Calu3 (cell line): ENCODE measurements at regions of chr13 and their contacts with region 1.

Region 1: GRCh38 chr13:45310341-45311125 is 30.4 kb downstream of the TPT1 start:
- DNase-seq: no peak
- H3K4me3 Mint-ChIP-seq: peak overlapping the region; percentile 68
- H3K27ac Mint-ChIP-seq: no peak overlapping the region
- H3K4me1 Mint-ChIP-seq: peaks cover 10% of the 10 kb centered on the region
- H3K27me3 Mint-ChIP-seq: no peaks in the 10 kb centered on the region
- CTCF ChIP-seq: no peak

Region 2: DNA sequence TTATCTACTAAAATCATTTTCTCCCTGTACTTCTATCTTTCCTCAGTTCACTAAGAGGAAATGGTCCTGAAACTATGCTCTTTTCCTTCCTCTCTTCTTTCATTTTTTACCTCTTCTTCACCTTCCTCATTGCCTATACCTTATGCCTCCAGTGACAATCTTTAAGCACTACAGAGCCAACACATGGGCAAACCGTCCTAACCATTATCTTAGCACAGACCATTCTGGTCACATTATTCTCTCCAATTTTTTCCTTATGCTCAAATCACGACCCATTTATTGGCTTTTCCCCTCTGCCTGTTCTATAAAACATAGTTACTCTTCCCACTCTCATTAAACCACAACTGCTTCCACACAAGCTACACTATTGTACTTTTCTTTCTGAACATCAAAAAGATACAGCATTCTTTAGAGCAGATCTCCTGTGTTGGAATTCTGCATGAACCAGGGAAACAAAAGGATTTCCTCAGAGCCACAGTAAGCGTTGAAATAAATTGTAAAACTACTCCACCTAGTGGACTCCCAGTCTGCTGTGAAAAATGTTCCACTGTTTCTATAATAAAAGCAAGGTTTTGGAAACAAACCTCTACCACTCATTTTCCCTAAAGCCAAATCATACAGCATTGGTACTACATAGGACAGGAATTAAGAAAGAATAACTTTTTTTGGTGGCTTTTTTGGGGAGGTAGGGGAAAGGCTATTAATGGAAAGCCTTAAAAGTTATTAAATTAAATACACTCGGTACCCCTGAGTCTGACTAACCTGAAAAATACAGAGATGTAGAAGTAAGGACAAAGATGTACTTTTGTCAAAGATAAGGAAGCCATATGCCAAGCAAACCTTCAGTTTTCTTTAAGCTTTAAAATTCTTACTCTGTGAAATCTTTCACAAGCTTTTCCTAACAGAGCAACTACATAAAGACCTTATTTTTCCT is 340.7 kb before region 1 on chr13:
- CTCF ChIA-PET with region 1: no interaction called
- intact Hi-C with region 1: loop called (anchors 5 kb)
- DNase-seq: no peak
- H3K4me3 Mint-ChIP-seq: no peak overlapping the region
- H3K27ac Mint-ChIP-seq: no peak overlapping the region
- H3K4me1 Mint-ChIP-seq: no peaks in the 10 kb centered on the region
- H3K27me3 Mint-ChIP-seq: no peaks in the 10 kb centered on the region
- CTCF ChIP-seq: peak; percentile 36